WTC11 (cell line): ENCODE measurements at regions of chr3 and their contacts with region 1.

Region 1: DNA sequence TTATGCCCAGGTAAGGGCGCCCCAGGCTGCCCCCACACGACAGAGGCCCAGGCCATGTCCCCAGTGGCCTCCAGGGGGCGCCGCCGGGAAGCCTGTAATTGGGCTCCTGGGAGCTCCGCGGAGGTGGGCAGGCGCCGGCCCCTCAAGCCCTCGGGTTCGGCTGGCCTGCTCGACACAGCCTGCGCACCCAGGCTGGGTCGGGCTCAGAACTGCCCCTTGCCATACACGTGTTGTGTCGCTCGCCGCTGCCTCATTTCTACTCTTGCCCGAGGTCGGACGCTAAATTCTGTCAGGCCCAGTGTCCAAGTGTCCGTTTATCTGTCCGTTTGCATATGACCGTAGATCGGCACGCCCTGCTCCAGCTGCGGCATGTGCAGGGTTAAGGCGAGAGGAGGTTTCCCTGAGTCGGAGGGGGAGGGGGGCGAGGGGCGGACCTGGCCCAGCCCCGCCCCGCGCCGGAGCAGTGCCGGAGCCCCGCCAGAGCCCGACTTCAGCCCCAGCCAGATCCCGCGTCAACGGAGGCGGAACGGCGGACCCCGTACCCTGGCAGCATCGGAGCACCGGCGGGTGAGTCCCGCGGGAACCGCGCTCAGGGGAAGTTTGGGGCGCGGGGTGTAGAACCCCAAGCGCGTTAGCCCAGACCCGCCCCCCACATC is at the start of gene KLHDC8B:
- DNase-seq: peak; percentile 96
- ATAC-seq: peak; percentile 85
- H3K4me3 Mint-ChIP-seq: peak within 1 kb of the TSS; percentile 82
- H3K27ac Mint-ChIP-seq: peak within 1 kb of the TSS; percentile 64
- H3K4me1 Mint-ChIP-seq: peaks cover 26% of the 10 kb centered on the region
- H3K27me3 Mint-ChIP-seq: peaks cover 20% of the 10 kb centered on the region
- CTCF ChIP-seq: peak; percentile 96
- total RNA-seq, gene KLHDC8B: 13.5 to 21.5 TPM (median 16.1 TPM) in 3 replicates

Region 2: GRCh38 chr3:48952510-48953118 is 218.6 kb before region 1 on chr3:
- CTCF ChIA-PET with region 1: no interaction called
- POLR2A ChIA-PET with region 1: no interaction called
- DNase-seq: peak; percentile 78
- ATAC-seq: peak; percentile 99
- H3K4me3 Mint-ChIP-seq: no peak overlapping the region
- H3K27ac Mint-ChIP-seq: peak overlapping the region; percentile 3
- H3K4me1 Mint-ChIP-seq: peaks cover 9% of the 10 kb centered on the region
- H3K27me3 Mint-ChIP-seq: no peaks in the 10 kb centered on the region
- CTCF ChIP-seq: no peak

Region 3: DNA sequence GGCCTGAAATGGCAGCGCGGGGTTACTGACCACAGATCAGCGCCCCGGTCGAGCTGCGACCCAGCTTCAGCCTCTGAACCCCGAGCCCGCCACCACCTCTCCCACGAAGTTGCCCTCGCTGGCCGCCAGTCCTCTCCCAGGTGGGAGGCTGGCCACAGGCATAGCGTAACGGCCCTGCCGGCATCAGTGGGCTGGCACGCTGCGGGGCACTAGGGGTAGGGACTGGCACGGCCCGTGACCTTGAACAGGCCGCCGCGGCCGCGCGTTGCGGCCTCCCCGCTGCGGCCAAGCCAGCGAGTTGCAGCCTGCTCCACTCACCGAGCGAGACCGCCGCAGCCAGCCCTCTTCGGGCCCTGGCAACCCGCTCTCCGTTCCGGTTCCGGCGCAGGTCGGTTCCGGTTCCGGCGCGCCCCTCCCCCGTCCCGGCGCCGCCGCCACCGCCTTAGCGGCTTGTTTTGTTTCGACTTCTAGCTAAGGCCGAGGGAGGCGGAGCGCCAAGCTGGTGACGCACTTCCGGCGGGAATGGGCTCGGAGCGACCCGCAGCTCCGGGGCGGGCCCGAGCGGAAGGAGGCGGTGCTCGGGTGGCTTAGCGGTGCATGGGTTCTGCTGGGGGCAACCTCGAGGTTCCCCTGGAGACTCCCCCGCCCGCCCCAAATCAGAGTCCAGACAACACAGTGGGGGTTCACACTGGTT is 50.7 kb before region 1 on chr3 and contains the start of gene USP19:
- CTCF ChIA-PET with region 1: interaction called, 16 read pairs
- POLR2A ChIA-PET with region 1: no interaction called
- DNase-seq: peak; percentile 93
- ATAC-seq: peak; percentile 95
- H3K4me3 Mint-ChIP-seq: peak within 1 kb of the TSS; percentile 82
- H3K27ac Mint-ChIP-seq: peak within 1 kb of the TSS; percentile 87
- H3K4me1 Mint-ChIP-seq: peaks cover 4% of the 10 kb centered on the region
- H3K27me3 Mint-ChIP-seq: no peaks in the 10 kb centered on the region
- CTCF ChIP-seq: no peak
- total RNA-seq, gene USP19: 72.4 to 75.8 TPM (median 73.3 TPM) in 3 replicates

Region 4: GRCh38 chr3:49133226-49133951 is 37.9 kb before region 1 on chr3:
- CTCF ChIA-PET with region 1: interaction called, 36 read pairs
- POLR2A ChIA-PET with region 1: interaction called, 4 read pairs
- DNase-seq: peak; percentile 81
- ATAC-seq: peak; percentile 72
- H3K4me3 Mint-ChIP-seq: peak overlapping the region; percentile 89
- H3K27ac Mint-ChIP-seq: peak overlapping the region; percentile 89
- H3K4me1 Mint-ChIP-seq: peaks cover 12% of the 10 kb centered on the region
- H3K27me3 Mint-ChIP-seq: peaks cover 5% of the 10 kb centered on the region
- CTCF ChIP-seq: no peak

Region 5: GRCh38 chr3:49158108-49158709 is 13.0 kb before region 1 on chr3:
- CTCF ChIA-PET with region 1: interaction called, 23 read pairs
- POLR2A ChIA-PET with region 1: no interaction called
- DNase-seq: peak; percentile 72
- ATAC-seq: peak; percentile 91
- H3K4me3 Mint-ChIP-seq: no peak overlapping the region
- H3K27ac Mint-ChIP-seq: no peak overlapping the region
- H3K4me1 Mint-ChIP-seq: no peaks in the 10 kb centered on the region
- H3K27me3 Mint-ChIP-seq: peaks cover 17% of the 10 kb centered on the region
- CTCF ChIP-seq: peak; percentile 36

Region 6: DNA sequence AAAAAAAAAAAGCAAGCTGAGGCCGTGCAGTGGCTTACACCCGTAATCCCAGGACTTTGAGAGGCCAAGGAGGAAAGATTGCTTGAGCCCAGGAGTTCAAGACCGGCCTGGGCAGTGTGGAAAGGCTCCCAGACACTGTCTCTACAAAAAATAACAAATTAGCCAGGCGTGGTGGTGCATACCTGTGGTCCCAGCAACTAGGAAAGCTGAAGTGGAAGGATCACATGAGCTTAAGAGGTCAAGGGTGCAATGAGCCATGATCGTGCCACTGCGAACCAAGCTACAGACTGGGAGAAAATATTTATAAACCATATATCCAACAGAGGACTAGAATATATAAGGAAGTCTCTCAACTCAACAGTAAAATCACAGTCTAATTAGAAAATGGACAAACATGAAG is 10.1 kb after region 1 on chr3:
- CTCF ChIA-PET with region 1: interaction called, 19 read pairs
- POLR2A ChIA-PET with region 1: no interaction called
- DNase-seq: no peak
- ATAC-seq: no peak
- H3K4me3 Mint-ChIP-seq: no peak overlapping the region
- H3K27ac Mint-ChIP-seq: no peak overlapping the region
- H3K4me1 Mint-ChIP-seq: no peaks in the 10 kb centered on the region
- H3K27me3 Mint-ChIP-seq: peaks cover 4% of the 10 kb centered on the region
- CTCF ChIP-seq: no peak